Activated T-helper 1 cell treated with anti-CD3 and anti-CD28 coated beads, Interleukin-12 subunit alpha, Interleukin-12 subunit beta, Interleukin-2, Interleukin-4 antibody, amounts not matched to agents 30 ng/mL and 10 ng/mL and 1 ng/mL, durations not matched to agents 14 hours and 24 hours and 36 hours (primary cell): ENCODE measurements at regions of chr4 and their contacts with region 1.

Region 1: GRCh38 chr4:10157478-10158332 is 41.1 kb upstream of the WDR1 start:
- DNase-seq: peak; percentile 16
- H3K4me3 Mint-ChIP-seq: no peak overlapping the region
- H3K27ac Mint-ChIP-seq: no peak overlapping the region
- H3K4me1 Mint-ChIP-seq: peaks cover 43% of the 10 kb centered on the region
- H3K27me3 Mint-ChIP-seq: peaks cover 5% of the 10 kb centered on the region

Region 2: GRCh38 chr4:10403633-10404445 is 246.1 kb after region 1 on chr4:
- intact Hi-C with region 1: loop called (anchors 1 kb)
- DNase-seq: no peak
- H3K4me3 Mint-ChIP-seq: no peak overlapping the region
- H3K27ac Mint-ChIP-seq: no peak overlapping the region
- H3K4me1 Mint-ChIP-seq: no peaks in the 10 kb centered on the region
- H3K27me3 Mint-ChIP-seq: peaks cover 5% of the 10 kb centered on the region

Region 3: DNA sequence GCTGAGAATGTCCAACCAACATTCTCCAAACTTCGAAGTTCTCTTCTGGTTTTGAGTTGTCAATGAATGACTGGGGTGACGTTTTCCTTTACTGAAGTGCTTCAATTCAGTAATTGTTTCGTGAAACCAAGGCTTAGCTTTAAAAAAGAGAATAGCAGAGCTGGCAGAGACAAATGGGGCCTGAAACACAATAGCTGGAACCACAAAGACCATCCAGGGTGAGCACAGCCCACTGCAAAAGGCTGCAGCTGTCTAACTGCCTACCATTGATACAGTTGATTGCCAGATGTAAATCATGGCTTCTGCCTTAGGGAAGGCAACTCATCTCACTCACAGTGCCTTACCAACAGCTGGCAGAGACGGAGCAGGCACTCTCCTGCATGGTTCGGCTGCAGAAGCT is 378.2 kb after region 1 on chr4:
- intact Hi-C with region 1: loop called (anchors 1 kb)
- DNase-seq: no peak
- H3K4me3 Mint-ChIP-seq: no peak overlapping the region
- H3K27ac Mint-ChIP-seq: no peak overlapping the region
- H3K4me1 Mint-ChIP-seq: no peaks in the 10 kb centered on the region
- H3K27me3 Mint-ChIP-seq: peaks cover 9% of the 10 kb centered on the region